Aorta (tissue), 5 donors: ENCODE measurements at regions of chr5 and their contacts with region 1.

Region 1: DNA sequence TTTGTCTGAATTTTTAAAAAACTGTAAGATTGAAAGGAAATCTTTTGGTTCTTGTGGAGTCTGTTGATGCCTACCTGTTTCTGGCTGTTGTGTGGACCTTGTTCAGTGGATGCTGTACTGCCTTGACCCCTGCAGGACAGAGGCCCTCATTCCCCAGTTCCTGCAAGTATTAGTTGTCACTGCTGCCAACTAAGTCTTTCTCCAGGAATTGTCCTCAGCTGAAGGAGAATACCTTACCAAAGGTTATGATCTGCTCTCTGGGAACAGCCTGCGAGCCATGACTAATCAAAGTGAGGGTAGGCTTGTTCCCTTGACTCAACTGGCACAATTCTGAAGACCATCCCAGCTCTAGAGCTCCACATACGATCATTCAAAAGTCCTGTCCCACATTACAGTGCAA is 145.3 kb upstream of the FST start:
- DNase-seq: no peak
- ATAC-seq: no peak
- H3K4me3 ChIP-seq: no peak overlapping the region
- H3K27ac ChIP-seq: peak overlapping the region in 1 of 2 donors; percentile 11
- H3K4me1 ChIP-seq: peaks cover 4 to 9% of the 10 kb centered on the region in 2 donors
- H3K27me3 ChIP-seq: no peaks in the 10 kb centered on the region

Region 2: DNA sequence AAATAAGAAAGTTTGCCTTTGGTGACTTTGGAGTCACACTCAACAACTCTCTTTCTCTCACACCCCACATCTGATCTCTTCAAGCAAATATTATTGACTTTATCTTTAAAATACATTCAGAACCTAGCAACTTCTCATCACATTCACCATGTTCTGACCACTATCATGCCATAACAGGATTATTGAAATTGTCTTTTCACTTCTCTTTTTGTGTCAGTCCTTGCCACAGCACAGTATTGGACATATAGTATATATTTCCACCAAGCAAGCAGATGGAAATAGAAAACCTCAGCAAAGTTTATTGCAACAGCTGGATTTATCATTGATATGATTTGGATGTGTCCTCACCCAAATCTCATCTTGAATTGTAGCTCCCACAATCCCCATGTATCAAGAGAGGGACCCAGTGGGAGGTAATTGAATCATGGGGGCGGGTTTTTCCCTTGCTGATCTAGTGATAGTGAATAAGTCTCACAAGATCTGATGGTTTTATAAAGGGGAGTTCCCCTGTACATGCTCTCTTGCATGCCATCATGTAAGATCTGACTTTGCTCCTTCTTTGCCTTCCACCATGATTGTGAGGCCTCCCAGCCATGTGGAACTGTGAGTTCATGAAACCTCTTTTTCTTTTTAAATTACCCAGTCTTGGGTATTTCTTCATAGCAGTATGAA is 574.3 kb before region 1 on chr5:
- intact Hi-C with region 1: no loop called
- DNase-seq: no peak
- ATAC-seq: no peak
- H3K4me3 ChIP-seq: no peak overlapping the region
- H3K27ac ChIP-seq: no peak overlapping the region
- H3K4me1 ChIP-seq: no peaks in the 10 kb centered on the region
- H3K27me3 ChIP-seq: no peaks in the 10 kb centered on the region

Region 3: DNA sequence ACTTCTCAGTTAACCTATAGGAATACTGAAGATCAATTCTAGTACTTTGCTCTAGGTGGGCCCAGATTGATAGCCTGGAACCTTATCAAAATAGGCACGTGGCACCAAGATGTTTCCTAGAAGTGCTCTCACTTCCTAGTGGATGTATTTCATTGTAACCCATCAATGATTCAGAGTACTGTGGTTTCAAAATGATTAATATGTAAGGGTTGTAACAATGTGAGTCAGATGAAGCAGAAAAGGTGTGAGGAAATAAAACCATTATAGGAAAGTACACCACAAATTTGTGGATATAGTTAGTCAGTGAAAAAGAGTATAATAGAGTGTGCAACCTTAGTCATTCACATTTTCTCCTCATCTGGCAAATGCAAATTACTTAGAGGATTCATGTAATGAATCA is 32.0 kb before region 1 on chr5:
- intact Hi-C with region 1: no loop called
- DNase-seq: no peak
- ATAC-seq: peak; percentile 11
- H3K4me3 ChIP-seq: no peak overlapping the region
- H3K27ac ChIP-seq: no peak overlapping the region
- H3K4me1 ChIP-seq: no peaks in the 10 kb centered on the region
- H3K27me3 ChIP-seq: no peaks in the 10 kb centered on the region

Region 4: DNA sequence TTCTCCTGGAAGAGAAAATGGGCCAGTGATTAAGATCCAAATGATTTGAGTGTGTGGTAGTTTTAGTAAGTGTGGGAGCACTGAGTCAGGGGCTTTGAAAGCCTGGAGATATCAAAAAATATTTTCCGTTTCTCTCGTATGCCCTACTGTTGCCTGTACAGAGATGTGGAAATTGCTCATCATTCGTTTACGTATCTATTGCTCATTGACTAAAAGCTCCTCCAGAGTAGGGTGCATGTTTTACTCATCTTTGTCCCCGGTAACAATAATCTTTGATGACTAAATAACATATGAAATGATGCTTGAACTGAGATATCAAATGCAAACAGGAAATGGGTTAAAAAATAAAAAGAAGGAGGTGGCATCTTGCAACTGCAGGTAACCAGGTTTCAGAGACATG is 31.1 kb after region 1 on chr5:
- intact Hi-C with region 1: loop called in 1 of 2 experiments (anchors 2 kb)
- DNase-seq: no peak
- ATAC-seq: no peak
- H3K4me3 ChIP-seq: no peak overlapping the region
- H3K27ac ChIP-seq: no peak overlapping the region
- H3K4me1 ChIP-seq: peaks cover 0 to 5% of the 10 kb centered on the region in 2 donors
- H3K27me3 ChIP-seq: no peaks in the 10 kb centered on the region

Region 5: GRCh38 chr5:53376853-53377252 is 41.7 kb after region 1 on chr5:
- intact Hi-C with region 1: no loop called
- DNase-seq: no peak
- ATAC-seq: no peak
- H3K4me3 ChIP-seq: no peak overlapping the region
- H3K27ac ChIP-seq: no peak overlapping the region
- H3K4me1 ChIP-seq: no peaks in the 10 kb centered on the region
- H3K27me3 ChIP-seq: no peaks in the 10 kb centered on the region

Region 6: GRCh38 chr5:53392073-53392472 is 57.0 kb after region 1 on chr5:
- intact Hi-C with region 1: no loop called
- DNase-seq: no peak
- ATAC-seq: no peak
- H3K4me3 ChIP-seq: no peak overlapping the region
- H3K27ac ChIP-seq: no peak overlapping the region
- H3K4me1 ChIP-seq: no peaks in the 10 kb centered on the region
- H3K27me3 ChIP-seq: no peaks in the 10 kb centered on the region